Mammary epithelial cell (primary cell): ENCODE measurements at regions of chr16 and their contacts with region 1.

Region 1: GRCh38 chr16:4350787-4351659 is at the start of gene PAM16:
- DNase-seq: peak; percentile 86
- H3K4me3 ChIP-seq: peak within 1 kb of the TSS; percentile 41 to 96 (median 72)
- H3K27ac ChIP-seq: peak within 1 kb of the TSS; percentile 46
- H3K4me1 ChIP-seq: peaks cover 5% of the 10 kb centered on the region
- H3K27me3 ChIP-seq: no peaks in the 10 kb centered on the region
- CTCF ChIP-seq: peak in 1 of 2 donors; percentile 19
- total RNA-seq, gene PAM16: 20.3 to 62.1 TPM

Region 2: DNA sequence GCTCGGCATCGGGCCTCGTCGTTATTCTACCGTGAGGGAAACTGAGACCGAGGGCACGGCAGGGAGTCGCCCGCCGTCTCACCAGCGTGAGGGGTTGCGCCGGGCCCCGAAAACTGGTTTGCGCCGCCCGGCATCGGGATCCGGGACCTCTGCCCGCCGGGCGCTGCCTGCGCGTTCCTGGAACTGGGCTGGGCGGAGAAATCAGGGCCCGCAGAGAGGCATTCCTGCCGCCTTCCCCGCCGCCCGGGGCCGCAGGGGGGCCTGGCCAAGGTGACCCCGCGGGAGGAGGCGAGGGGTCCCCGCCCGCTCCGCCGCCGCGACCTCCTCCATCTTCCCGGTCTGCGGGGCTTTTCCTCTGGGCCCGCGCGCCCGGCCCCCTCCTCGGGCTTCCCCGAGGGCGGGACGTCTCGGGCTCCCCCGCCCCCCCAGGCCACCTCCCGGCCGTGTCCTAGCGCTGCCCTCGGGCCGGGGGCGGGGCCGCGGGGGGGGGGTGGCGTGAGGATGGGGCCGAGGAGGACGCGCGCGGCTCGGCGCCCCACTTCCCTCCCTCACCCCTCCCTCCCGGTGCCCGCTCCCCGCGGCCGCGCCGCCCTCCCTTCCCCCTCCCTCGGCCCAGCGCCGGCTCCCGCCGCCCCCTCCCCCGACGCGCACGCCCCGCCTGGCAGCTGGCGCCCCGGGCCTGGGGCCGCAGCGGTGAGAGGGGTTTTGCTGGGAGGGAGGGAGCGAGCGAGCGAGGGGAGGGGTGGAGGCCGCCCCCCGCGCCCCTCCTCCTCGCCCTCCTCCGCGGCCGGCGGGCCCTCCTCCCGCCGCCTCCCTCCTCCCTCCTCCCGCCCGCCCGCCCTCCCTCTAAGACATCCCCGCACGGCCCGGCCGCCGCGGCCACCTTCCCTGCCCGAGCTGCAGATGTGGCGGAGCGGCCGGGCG is 35.6 kb before region 1 on chr16 and contains the start of gene GLIS2:
- CTCF ChIA-PET with region 1: no interaction called
- dilution Hi-C with region 1: no loop called
- in situ Hi-C with region 1: no loop called
- intact Hi-C with region 1: loop called (anchors 2 kb)
- DNase-seq: peak; percentile 59
- H3K4me3 ChIP-seq: peak within 1 kb of the TSS; percentile 59 to 81 (median 64)
- H3K27ac ChIP-seq: peak within 1 kb of the TSS; percentile 29
- H3K4me1 ChIP-seq: peaks cover 40% of the 10 kb centered on the region
- H3K27me3 ChIP-seq: no peaks in the 10 kb centered on the region
- CTCF ChIP-seq: no peak
- total RNA-seq, gene GLIS2: 3.3 to 13.5 TPM

Region 3: GRCh38 chr16:4371357-4372000 is 20.5 kb after region 1 on chr16 and contains the start of gene VASN:
- CTCF ChIA-PET with region 1: no interaction called
- dilution Hi-C with region 1: no loop called
- in situ Hi-C with region 1: no loop called
- intact Hi-C with region 1: loop called (anchors 1 kb)
- DNase-seq: peak; percentile 44
- H3K4me3 ChIP-seq: peak within 1 kb of the TSS; percentile 37 to 54 (median 53)
- H3K27ac ChIP-seq: no peak within 1 kb of the TSS
- H3K4me1 ChIP-seq: peaks cover 75% of the 10 kb centered on the region
- H3K27me3 ChIP-seq: no peaks in the 10 kb centered on the region
- CTCF ChIP-seq: no peak
- total RNA-seq, gene VASN: 5.0 to 25.5 TPM

Region 4: GRCh38 chr16:4384509-4384942 is 33.5 kb after region 1 on chr16:
- CTCF ChIA-PET with region 1: no interaction called
- dilution Hi-C with region 1: no loop called
- in situ Hi-C with region 1: no loop called
- intact Hi-C with region 1: no loop called
- DNase-seq: no peak
- H3K4me3 ChIP-seq: no peak overlapping the region
- H3K27ac ChIP-seq: no peak overlapping the region
- H3K4me1 ChIP-seq: peaks cover 9% of the 10 kb centered on the region
- H3K27me3 ChIP-seq: no peaks in the 10 kb centered on the region
- CTCF ChIP-seq: no peak

Region 5: GRCh38 chr16:4402439-4403132 is 51.6 kb after region 1 on chr16:
- CTCF ChIA-PET with region 1: interaction called, 23 read pairs
- dilution Hi-C with region 1: no loop called
- in situ Hi-C with region 1: no loop called
- intact Hi-C with region 1: no loop called
- DNase-seq: peak; percentile 53
- H3K4me3 ChIP-seq: peak overlapping the region in 1 of 3 experiments; percentile 22
- H3K27ac ChIP-seq: no peak overlapping the region
- H3K4me1 ChIP-seq: peaks cover 4% of the 10 kb centered on the region
- H3K27me3 ChIP-seq: no peaks in the 10 kb centered on the region
- CTCF ChIP-seq: peak; percentile 57 to 88